Ascending aorta (tissue), 2 donors: ENCODE measurements at regions of chr1 and their contacts with region 1.

Region 1: DNA sequence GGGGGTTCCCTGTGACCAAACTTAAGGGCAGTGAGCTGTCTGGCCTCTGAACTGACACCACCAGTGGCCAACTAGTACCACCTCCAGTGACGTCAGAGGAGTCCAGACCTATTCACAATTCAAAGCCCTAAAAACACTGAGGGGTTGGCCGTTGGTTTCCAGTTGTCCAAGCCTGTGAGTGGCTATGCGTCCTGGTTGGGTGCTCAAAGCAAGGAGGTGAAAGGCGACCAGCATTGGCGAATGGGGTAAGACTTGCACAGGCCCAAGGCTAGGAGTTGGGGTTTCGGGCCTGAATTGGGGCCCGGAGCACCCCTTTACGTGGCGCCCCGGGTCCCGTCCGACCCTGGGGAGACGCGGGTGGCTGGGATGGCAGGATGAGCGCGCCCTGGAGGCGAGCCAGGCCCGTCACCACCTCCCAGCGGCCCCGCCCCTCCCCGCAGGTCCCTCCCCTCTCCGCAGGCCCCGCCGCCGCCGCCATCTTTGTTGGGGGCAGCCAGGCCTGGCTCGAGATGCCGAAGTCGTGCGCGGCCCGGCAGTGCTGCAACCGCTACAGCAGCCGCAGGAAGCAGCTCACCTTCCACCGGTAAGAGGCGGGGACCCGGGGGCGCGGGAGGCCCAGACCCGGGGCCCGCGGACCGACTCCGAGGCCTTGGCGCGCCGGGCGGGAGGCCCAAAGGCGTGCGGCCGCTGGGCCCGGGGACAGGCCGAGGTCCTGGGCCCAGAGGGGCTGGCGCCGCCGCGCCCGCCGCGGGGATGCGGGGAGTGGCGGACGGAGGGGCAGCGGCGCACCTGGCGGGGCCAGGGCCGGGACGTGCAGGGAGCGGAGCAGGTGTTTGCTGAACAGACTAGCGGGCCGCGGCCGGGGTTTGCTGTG is at the start of gene THAP3:
- DNase-seq: peak; percentile 37 to 91
- H3K4me3 ChIP-seq: peak within 1 kb of the TSS; percentile 87 to 88
- H3K27ac ChIP-seq: peak within 1 kb of the TSS; percentile 80 to 92
- H3K4me1 ChIP-seq: peaks cover 4 to 14% of the 10 kb centered on the region in 2 donors
- H3K27me3 ChIP-seq: no peaks in the 10 kb centered on the region
- CTCF ChIP-seq: no peak
- total RNA-seq, gene THAP3: 9.3 TPM

Region 2: DNA sequence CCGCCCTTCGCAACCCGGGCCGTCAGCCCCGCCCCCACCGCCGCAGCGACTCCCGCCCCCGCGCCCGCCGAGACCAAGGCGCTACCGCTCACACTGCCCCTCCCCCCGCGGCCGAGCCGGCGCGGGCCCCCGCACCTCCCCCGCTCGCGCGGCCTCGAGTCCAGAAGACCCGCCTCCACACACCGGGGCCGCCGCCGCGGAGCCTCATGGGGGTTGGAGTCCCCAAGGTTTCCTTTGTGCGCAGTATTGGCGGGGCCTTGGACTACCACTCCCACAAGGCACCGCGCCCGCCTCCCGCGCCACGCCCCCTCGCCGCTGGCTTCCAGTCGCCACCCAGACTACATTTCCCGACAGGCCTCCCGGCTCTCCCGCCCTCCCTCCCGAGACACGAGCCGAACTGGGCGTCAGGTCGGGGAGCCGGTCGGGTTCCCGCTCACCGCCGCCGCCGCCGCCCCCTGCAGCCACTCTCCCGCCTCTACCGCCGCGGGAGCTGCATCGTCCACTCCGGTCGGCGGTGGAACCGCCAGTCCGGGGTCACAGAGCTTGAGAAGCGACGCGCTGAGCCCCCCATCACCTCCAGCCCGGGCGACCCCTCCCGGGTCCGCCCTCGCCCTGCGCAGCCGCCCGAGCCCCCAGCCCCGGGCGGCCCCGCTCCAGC is 11.5 kb before region 1 on chr1 and contains the start of gene PHF13:
- intact Hi-C with region 1: loop called (anchors 1 kb)
- DNase-seq: peak; percentile 98 to 100
- H3K4me3 ChIP-seq: peak within 1 kb of the TSS; percentile 94 to 100
- H3K27ac ChIP-seq: peak within 1 kb of the TSS; percentile 97 to 98
- H3K4me1 ChIP-seq: peaks cover 4 to 29% of the 10 kb centered on the region in 2 donors
- H3K27me3 ChIP-seq: no peaks in the 10 kb centered on the region
- CTCF ChIP-seq: no peak
- total RNA-seq, gene PHF13: 1.5 TPM

Region 3: DNA sequence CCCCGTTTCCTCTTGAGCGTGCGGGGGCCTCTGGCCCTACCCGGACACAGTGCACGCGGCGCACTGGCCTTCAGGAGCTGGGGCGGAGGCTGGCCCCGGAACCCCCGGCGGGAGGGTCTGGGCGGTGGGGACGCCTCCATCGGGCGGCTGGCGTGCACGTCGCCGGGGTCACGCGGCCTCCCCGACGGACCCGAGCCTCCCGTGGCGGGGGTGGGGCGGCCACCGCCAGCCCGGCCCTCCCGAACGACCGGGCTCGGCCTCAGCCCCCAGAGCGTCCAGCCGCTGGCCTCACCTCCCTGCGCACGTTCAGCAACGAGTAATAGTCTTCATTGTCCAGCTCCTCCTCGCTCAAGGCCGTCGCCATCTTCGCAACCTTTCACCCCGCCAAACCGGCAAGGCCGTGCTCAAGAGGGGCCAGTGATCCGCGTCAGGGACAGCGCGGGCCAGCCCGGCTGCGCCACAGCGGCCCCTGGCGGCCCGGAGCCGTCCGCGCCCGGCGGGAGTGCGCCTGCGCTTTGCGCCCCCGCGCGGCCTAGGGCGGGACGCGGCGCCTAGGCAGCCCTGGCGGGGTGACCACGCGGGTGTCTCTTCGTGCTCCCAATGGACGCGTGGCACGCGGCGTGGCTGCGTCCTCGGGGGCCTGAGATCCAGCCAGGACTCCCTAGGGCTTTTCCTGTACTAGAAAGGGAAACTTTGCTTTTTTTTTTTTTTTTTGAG is 76.6 kb after region 1 on chr1 and contains the start of gene DNAJC11:
- intact Hi-C with region 1: loop called (anchors 10 kb)
- DNase-seq: peak; percentile 30 to 92
- H3K4me3 ChIP-seq: peak within 1 kb of the TSS; percentile 90 to 96
- H3K27ac ChIP-seq: peak within 1 kb of the TSS; percentile 55 to 77
- H3K4me1 ChIP-seq: peaks cover 12 to 15% of the 10 kb centered on the region in 2 donors
- H3K27me3 ChIP-seq: no peaks in the 10 kb centered on the region
- CTCF ChIP-seq: peak; percentile 47 to 100 (median 54)
- total RNA-seq, gene DNAJC11: 12.9 TPM